Calu3 (cell line): ENCODE measurements at regions of chr2 and their contacts with region 1.

Region 1: GRCh38 chr2:20446917-20447436 is at the start of gene RHOB:
- DNase-seq: peak; percentile 98
- H3K4me3 Mint-ChIP-seq: peak within 1 kb of the TSS; percentile 89
- H3K27ac Mint-ChIP-seq: peak within 1 kb of the TSS; percentile 87
- H3K4me1 Mint-ChIP-seq: peaks cover 38% of the 10 kb centered on the region
- H3K27me3 Mint-ChIP-seq: no peaks in the 10 kb centered on the region
- CTCF ChIP-seq: no peak
- total RNA-seq, gene RHOB: 143 and 147 TPM in 2 replicates

Region 2: GRCh38 chr2:20396356-20397000 is 50.5 kb before region 1 on chr2:
- CTCF ChIA-PET with region 1: interaction called, 4 read pairs
- intact Hi-C with region 1: loop called (anchors 1 kb)
- DNase-seq: no peak
- H3K4me3 Mint-ChIP-seq: no peak overlapping the region
- H3K27ac Mint-ChIP-seq: no peak overlapping the region
- H3K4me1 Mint-ChIP-seq: peaks cover 10% of the 10 kb centered on the region
- H3K27me3 Mint-ChIP-seq: peaks cover 39% of the 10 kb centered on the region
- CTCF ChIP-seq: no peak

Region 3: GRCh38 chr2:20424300-20425290 is 22.4 kb before region 1 on chr2:
- CTCF ChIA-PET with region 1: no interaction called
- intact Hi-C with region 1: no loop called
- DNase-seq: no peak
- H3K4me3 Mint-ChIP-seq: no peak overlapping the region
- H3K27ac Mint-ChIP-seq: no peak overlapping the region
- H3K4me1 Mint-ChIP-seq: no peaks in the 10 kb centered on the region
- H3K27me3 Mint-ChIP-seq: peaks cover 26% of the 10 kb centered on the region
- CTCF ChIP-seq: no peak

Region 4: GRCh38 chr2:20516646-20517341 is 69.8 kb after region 1 on chr2:
- CTCF ChIA-PET with region 1: interaction called, 3 read pairs
- intact Hi-C with region 1: loop called (anchors 2 kb)
- DNase-seq: peak; percentile 72
- H3K4me3 Mint-ChIP-seq: peak overlapping the region; percentile 12
- H3K27ac Mint-ChIP-seq: peak overlapping the region; percentile 99
- H3K4me1 Mint-ChIP-seq: peaks cover 56% of the 10 kb centered on the region
- H3K27me3 Mint-ChIP-seq: no peaks in the 10 kb centered on the region
- CTCF ChIP-seq: no peak

Region 5: GRCh38 chr2:20584637-20585321 is 137.8 kb after region 1 on chr2:
- CTCF ChIA-PET with region 1: interaction called, 9 read pairs
- intact Hi-C with region 1: loop called (anchors 5 kb)
- DNase-seq: peak; percentile 86
- H3K4me3 Mint-ChIP-seq: no peak overlapping the region
- H3K27ac Mint-ChIP-seq: peak overlapping the region; percentile 39
- H3K4me1 Mint-ChIP-seq: peaks cover 30% of the 10 kb centered on the region
- H3K27me3 Mint-ChIP-seq: no peaks in the 10 kb centered on the region
- CTCF ChIP-seq: no peak

Region 6: GRCh38 chr2:20600756-20601325 is 153.9 kb after region 1 on chr2:
- CTCF ChIA-PET with region 1: interaction called, 4 read pairs
- intact Hi-C with region 1: loop called (anchors 1 kb)
- DNase-seq: no peak
- H3K4me3 Mint-ChIP-seq: no peak overlapping the region
- H3K27ac Mint-ChIP-seq: no peak overlapping the region
- H3K4me1 Mint-ChIP-seq: peaks cover 33% of the 10 kb centered on the region
- H3K27me3 Mint-ChIP-seq: no peaks in the 10 kb centered on the region
- CTCF ChIP-seq: peak; percentile 35

Region 7: DNA sequence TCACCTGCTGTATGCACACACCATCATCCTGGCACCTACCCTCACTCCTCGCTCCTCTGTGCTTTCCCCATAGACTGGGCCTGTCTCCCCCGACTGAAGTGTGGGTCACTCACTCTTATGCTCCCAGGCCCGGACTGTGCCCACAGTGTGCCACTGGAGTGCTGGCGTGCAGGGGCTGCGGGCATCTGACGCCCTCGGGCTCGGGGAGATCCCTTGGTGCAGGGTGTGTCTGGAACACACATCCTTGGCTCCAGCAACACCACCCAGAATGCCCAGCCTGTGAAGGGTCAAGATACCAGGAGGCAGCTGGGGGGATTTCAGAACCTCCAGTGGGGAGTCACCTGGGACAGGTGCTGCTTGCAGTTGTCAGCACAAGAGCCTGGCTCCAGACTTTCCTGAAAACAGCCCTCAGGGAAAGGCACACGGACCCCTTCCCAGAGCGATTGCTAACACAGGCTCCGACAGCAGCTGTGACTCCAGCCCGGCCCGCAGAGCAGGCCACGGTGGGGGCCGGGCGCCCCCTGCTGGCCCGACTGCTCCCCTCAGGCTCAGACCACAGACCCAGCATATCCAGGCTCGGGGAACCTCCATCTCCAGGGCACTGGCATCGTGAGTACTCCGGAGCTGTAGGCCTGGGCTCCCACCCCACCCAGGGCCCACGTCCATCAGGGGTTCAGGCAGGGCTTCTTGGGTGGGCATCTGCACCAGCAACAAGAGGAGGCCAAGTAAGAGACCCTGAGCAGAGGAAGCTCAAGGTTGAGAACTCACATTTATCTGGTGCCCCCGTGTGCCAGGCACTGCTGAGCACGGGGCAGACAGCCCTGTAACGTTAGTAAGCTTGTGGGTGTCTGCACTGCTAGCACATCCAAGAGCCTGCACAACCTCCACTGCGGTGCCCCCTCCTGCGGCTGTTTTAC is 195.3 kb after region 1 on chr2:
- CTCF ChIA-PET with region 1: interaction called, 10 read pairs
- intact Hi-C with region 1: no loop called
- DNase-seq: peak; percentile 89
- H3K4me3 Mint-ChIP-seq: no peak overlapping the region
- H3K27ac Mint-ChIP-seq: no peak overlapping the region
- H3K4me1 Mint-ChIP-seq: peaks cover 10% of the 10 kb centered on the region
- H3K27me3 Mint-ChIP-seq: no peaks in the 10 kb centered on the region
- CTCF ChIP-seq: peak; percentile 96

Region 8: DNA sequence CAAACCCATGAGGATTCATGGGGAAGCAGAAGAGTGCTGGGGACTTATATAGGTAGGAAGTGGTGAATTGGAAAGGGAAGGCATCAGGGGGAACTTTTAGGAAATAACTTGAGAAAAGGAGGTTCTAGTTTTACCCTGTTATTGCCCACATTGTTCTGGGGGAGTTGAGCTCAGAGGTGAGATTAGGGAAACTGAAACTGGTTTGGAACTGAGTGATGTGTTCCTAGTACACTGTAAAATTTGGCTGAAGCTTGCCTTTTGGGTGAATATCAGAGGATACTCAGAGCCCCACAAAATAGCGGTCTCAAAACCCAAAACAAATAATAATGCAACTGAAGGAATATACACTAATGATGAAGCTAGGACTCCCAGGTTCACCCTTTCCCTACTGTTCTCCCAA is 636.5 kb after region 1 on chr2:
- CTCF ChIA-PET with region 1: no interaction called
- intact Hi-C with region 1: no loop called
- DNase-seq: no peak
- H3K4me3 Mint-ChIP-seq: no peak overlapping the region
- H3K27ac Mint-ChIP-seq: no peak overlapping the region
- H3K4me1 Mint-ChIP-seq: no peaks in the 10 kb centered on the region
- H3K27me3 Mint-ChIP-seq: peaks cover 27% of the 10 kb centered on the region
- CTCF ChIP-seq: no peak